ENCODE measurements at regions of chr6 and their contacts with region 1.

Region 1: DNA sequence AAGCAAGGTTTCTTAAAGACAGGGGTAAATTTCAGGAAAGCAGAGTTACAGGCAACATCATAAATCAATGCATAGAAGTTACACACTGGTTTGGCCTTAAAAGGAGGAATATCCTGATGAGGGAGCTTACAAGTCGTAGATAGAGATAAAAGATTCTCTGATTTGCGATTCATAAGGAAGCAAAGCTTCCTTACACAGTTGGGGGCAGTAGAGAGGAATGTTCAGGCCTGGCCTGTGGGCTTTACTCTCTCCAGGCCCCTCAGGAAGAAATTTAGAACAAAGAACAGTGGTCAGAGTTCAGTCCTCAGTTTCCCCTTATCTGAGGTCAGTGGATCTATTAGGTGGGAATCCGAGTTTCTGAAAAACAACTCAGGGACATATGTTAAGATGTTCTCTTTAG is 19.3 kb downstream of the HLA-C start:
- DNase-seq: peak in 2 of 9 experiments; percentile 8 to 35
- ATAC-seq: no peak
- H3K4me3 ChIP-seq: no peak overlapping the region
- H3K4me3 Mint-ChIP-seq: no peak overlapping the region
- H3K27ac ChIP-seq: no peak overlapping the region
- H3K27ac Mint-ChIP-seq: no peak overlapping the region
- H3K4me1 ChIP-seq: no peaks in the 10 kb centered on the region
- H3K4me1 Mint-ChIP-seq: peaks cover 9% of the 10 kb centered on the region
- H3K27me3 ChIP-seq: no peaks in the 10 kb centered on the region
- H3K27me3 Mint-ChIP-seq: no peaks in the 10 kb centered on the region
- CTCF ChIP-seq: no peak

Region 2: GRCh38 chr6:31345026-31345730 is 92.6 kb after region 1 on chr6:
- CTCF ChIA-PET with region 1: no interaction called
- POLR2A ChIA-PET with region 1: no interaction called
- intact Hi-C with region 1: loop called in 1 of 2 experiments (anchors 1 kb)
- DNase-seq: peak in 1 of 9 experiments; percentile 32
- ATAC-seq: no peak
- H3K4me3 ChIP-seq: no peak overlapping the region
- H3K4me3 Mint-ChIP-seq: no peak overlapping the region
- H3K27ac ChIP-seq: no peak overlapping the region
- H3K27ac Mint-ChIP-seq: no peak overlapping the region
- H3K4me1 ChIP-seq: no peaks in the 10 kb centered on the region
- H3K4me1 Mint-ChIP-seq: peaks cover 8% of the 10 kb centered on the region
- H3K27me3 ChIP-seq: no peaks in the 10 kb centered on the region
- H3K27me3 Mint-ChIP-seq: no peaks in the 10 kb centered on the region
- CTCF ChIP-seq: no peak